ENCODE measurements at regions of chr1 and their contacts with region 1.

Region 1: DNA sequence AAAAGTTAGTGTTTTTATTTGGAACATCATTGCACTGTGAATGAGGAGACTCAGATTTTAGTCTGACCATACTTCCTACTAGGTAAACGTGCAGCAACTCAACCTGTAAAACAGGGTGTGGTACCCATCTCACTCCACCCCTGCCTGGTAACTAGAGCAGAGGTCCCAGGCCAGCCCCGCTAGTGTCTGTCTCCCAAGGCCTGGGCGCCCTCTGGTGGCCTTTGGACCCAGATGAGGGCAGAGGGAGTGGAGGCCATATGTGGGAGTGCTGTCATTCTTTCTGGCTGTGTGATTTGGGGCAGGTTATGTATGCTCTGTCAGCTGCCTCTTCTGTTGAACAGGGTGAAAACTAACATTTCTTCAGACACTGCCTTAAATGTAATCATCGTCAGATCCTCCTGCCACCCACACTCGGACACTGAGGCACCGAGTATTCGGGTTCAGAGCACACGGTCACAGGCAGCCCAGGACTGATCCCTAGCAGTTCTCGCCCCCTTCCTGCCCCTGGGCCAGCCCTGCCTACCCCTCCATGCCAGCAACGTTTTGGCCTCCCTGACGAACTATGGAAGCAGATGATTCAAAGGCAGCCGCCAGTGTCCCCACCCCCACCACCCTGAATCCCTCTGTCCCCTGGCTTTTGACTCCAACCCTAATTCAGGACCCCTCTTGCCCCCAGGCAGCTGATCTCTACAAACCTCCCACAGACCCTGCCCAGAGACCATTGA is 76.0 kb downstream of the CD247 start:
- DNase-seq: peak; percentile 94
- ATAC-seq: peak; percentile 80
- H3K4me3 Mint-ChIP-seq: no peak overlapping the region
- H3K27ac Mint-ChIP-seq: peak overlapping the region; percentile 68
- H3K4me1 Mint-ChIP-seq: peaks cover 84% of the 10 kb centered on the region
- H3K27me3 Mint-ChIP-seq: no peaks in the 10 kb centered on the region

Region 2: GRCh38 chr1:166884040-166884642 is 558.1 kb before region 1 on chr1:
- CTCF ChIA-PET with region 1: no interaction called
- POLR2A ChIA-PET with region 1: no interaction called
- intact Hi-C with region 1: no loop called
- DNase-seq: peak; percentile 72
- ATAC-seq: peak; percentile 89
- H3K4me3 Mint-ChIP-seq: no peak overlapping the region
- H3K27ac Mint-ChIP-seq: no peak overlapping the region
- H3K4me1 Mint-ChIP-seq: peaks cover 18% of the 10 kb centered on the region
- H3K27me3 Mint-ChIP-seq: peaks cover 16% of the 10 kb centered on the region

Region 3: DNA sequence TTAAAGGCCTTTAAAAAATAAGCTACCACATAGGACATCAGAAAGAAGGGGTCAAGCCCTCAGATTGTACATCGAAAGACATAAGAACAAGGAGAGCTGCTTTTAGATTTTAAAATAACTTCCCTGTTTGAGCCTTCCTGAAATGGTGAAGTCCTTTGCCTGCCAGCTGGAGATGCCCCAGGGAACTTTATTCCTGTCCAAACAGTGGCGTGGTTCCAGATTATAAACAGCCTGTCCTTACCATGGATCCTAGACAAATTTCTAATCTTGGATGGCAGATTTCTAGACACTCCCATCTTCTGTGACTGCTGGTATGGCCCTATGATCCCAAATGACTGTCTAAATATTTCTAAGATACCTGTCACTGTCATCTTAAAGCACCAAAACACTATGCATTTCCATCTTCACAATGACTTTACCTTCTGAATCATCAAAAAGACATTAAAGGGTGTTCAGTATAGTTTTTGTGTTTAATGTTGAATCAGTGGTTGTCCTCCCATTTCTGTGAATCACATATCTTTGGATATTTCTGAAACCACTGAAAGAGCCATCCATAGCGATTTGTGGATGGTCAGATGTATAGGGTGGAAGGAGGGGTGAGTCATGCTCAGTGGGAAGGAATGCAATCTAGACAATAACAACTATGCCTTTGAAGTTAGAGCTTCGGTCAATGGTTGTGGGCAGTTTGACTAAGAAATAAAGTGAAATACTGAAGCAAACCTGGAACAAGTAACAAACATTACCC is 490.1 kb before region 1 on chr1:
- CTCF ChIA-PET with region 1: no interaction called
- POLR2A ChIA-PET with region 1: no interaction called
- intact Hi-C with region 1: no loop called
- DNase-seq: peak; percentile 21
- ATAC-seq: peak; percentile 81
- H3K4me3 Mint-ChIP-seq: no peak overlapping the region
- H3K27ac Mint-ChIP-seq: no peak overlapping the region
- H3K4me1 Mint-ChIP-seq: peaks cover 12% of the 10 kb centered on the region
- H3K27me3 Mint-ChIP-seq: peaks cover 16% of the 10 kb centered on the region

Region 4: GRCh38 chr1:167066333-167067122 is 375.8 kb before region 1 on chr1:
- CTCF ChIA-PET with region 1: interaction called, 3 read pairs
- POLR2A ChIA-PET with region 1: no interaction called
- intact Hi-C with region 1: loop called (anchors 1 to 10 kb)
- DNase-seq: peak; percentile 87
- ATAC-seq: peak; percentile 95
- H3K4me3 Mint-ChIP-seq: no peak overlapping the region
- H3K27ac Mint-ChIP-seq: no peak overlapping the region
- H3K4me1 Mint-ChIP-seq: no peaks in the 10 kb centered on the region
- H3K27me3 Mint-ChIP-seq: no peaks in the 10 kb centered on the region

Region 5: GRCh38 chr1:167263819-167264464 is 178.3 kb before region 1 on chr1:
- CTCF ChIA-PET with region 1: interaction called, 41 read pairs
- POLR2A ChIA-PET with region 1: no interaction called
- intact Hi-C with region 1: loop called (anchors 1 kb)
- DNase-seq: no peak
- ATAC-seq: peak; percentile 43
- H3K4me3 Mint-ChIP-seq: no peak overlapping the region
- H3K27ac Mint-ChIP-seq: no peak overlapping the region
- H3K4me1 Mint-ChIP-seq: peaks cover 28% of the 10 kb centered on the region
- H3K27me3 Mint-ChIP-seq: no peaks in the 10 kb centered on the region

Region 6: GRCh38 chr1:167401260-167401873 is 40.9 kb before region 1 on chr1:
- CTCF ChIA-PET with region 1: interaction called, 6 read pairs
- POLR2A ChIA-PET with region 1: no interaction called
- intact Hi-C with region 1: loop called (anchors 1 to 5 kb)
- DNase-seq: peak; percentile 64
- ATAC-seq: peak; percentile 71
- H3K4me3 Mint-ChIP-seq: no peak overlapping the region
- H3K27ac Mint-ChIP-seq: no peak overlapping the region
- H3K4me1 Mint-ChIP-seq: no peaks in the 10 kb centered on the region
- H3K27me3 Mint-ChIP-seq: no peaks in the 10 kb centered on the region

Region 7: DNA sequence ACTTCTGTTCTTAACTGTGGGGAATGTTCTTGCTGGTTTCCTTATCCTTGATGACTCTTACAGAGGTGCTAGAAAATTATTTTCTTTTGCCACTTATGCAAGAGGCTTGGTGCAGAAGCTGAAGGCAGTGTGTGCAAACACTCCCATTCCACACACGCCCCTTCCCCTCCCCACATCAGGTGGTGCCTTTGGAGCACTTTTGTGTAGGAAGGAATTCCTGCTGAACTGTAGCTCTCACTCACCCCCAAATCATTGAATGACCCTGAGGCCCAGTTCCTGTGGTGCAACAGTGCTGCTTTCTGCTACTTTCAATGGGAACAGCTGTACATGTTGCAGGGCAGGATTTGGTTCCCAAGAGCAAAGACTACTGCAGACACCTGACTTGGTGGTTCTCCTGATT is 25.8 kb before region 1 on chr1:
- CTCF ChIA-PET with region 1: interaction called, 3 read pairs
- POLR2A ChIA-PET with region 1: interaction called, 10 read pairs
- intact Hi-C with region 1: no loop called
- DNase-seq: no peak
- ATAC-seq: no peak
- H3K4me3 Mint-ChIP-seq: no peak overlapping the region
- H3K27ac Mint-ChIP-seq: no peak overlapping the region
- H3K4me1 Mint-ChIP-seq: peaks cover 18% of the 10 kb centered on the region
- H3K27me3 Mint-ChIP-seq: no peaks in the 10 kb centered on the region

Region 8: DNA sequence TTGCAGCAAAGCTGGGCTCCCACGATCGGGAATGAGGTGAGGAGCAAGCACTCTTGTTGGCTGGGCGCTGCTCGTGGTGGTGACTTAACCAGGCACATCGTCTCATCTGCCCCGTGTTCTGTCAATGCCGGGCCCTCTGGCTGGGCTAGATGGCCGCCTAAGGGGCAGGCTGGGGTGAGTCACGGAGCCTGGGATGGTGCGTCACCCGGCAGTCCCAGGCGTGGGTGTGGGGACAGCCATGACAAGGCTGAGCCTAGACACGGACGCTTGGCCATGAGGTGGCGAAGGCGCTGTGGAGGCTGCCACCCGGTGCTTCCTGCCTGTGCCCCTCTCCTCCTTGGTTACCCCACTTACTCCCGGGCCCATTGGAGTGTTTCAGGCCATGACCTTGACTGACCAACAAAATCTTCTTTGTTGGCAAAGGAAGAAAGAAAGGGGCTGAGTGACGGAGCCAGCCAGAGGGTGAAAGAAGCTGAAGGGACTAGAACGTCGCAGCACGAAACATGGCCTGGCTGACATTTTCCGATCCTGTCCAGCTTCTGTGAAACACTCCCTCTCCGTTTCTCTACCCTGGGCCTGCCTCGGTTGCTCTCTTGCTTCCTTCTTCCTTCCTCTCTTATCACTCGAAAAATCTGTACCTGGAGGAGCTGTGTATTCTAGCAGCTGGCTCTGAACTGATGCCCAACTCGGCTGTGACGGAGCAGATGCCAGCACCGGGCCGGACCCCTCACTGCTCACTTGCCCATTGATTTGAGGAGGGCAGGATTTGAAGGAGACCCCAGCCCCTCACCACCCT is 75.4 kb after region 1 on chr1:
- CTCF ChIA-PET with region 1: interaction called, 17 read pairs
- POLR2A ChIA-PET with region 1: interaction called, 15 read pairs
- intact Hi-C with region 1: loop called (anchors 1 kb)
- DNase-seq: peak; percentile 97
- ATAC-seq: peak; percentile 88
- H3K4me3 Mint-ChIP-seq: peak overlapping the region; percentile 90
- H3K27ac Mint-ChIP-seq: peak overlapping the region; percentile 99
- H3K4me1 Mint-ChIP-seq: peaks cover 43% of the 10 kb centered on the region
- H3K27me3 Mint-ChIP-seq: no peaks in the 10 kb centered on the region